HCT116 (cell line): ENCODE measurements at regions of chr21 and their contacts with region 1.

Region 1: GRCh38 chr21:39430457-39430856 is 15.1 kb downstream of the LCA5L start:
- DNase-seq: no peak
- ATAC-seq: no peak
- H3K4me3 ChIP-seq: no peak overlapping the region
- H3K27ac ChIP-seq: no peak overlapping the region
- H3K4me1 ChIP-seq: no peaks in the 10 kb centered on the region
- H3K27me3 ChIP-seq: no peaks in the 10 kb centered on the region
- CTCF ChIP-seq: no peak
- POLR2A ChIP-seq: no peak
- RAD21 ChIP-seq: no peak

Region 2: GRCh38 chr21:39445321-39446269 is 15.1 kb after region 1 on chr21 and contains the start of gene LCA5L:
- CTCF ChIA-PET with region 1: interaction called, 10 read pairs
- POLR2A ChIA-PET with region 1: no interaction called
- RAD21 ChIA-PET with region 1: no interaction called
- intact Hi-C with region 1: no loop called
- DNase-seq: peak; percentile 70
- ATAC-seq: peak; percentile 90
- H3K4me3 ChIP-seq: peak within 1 kb of the TSS; percentile 73 to 90
- H3K27ac ChIP-seq: peak within 1 kb of the TSS; percentile 74
- H3K4me1 ChIP-seq: peaks cover 10 to 16% of the 10 kb centered on the region in 2 experiments; a peak in 3 of 4 replicates
- H3K27me3 ChIP-seq: no peaks in the 10 kb centered on the region
- CTCF ChIP-seq: no peak
- POLR2A ChIP-seq: peak; percentile 77
- RAD21 ChIP-seq: no peak
- total RNA-seq, gene LCA5L: 1.9 TPM